ENCODE measurements at regions of chr18 and their contacts with region 1.

Region 1: DNA sequence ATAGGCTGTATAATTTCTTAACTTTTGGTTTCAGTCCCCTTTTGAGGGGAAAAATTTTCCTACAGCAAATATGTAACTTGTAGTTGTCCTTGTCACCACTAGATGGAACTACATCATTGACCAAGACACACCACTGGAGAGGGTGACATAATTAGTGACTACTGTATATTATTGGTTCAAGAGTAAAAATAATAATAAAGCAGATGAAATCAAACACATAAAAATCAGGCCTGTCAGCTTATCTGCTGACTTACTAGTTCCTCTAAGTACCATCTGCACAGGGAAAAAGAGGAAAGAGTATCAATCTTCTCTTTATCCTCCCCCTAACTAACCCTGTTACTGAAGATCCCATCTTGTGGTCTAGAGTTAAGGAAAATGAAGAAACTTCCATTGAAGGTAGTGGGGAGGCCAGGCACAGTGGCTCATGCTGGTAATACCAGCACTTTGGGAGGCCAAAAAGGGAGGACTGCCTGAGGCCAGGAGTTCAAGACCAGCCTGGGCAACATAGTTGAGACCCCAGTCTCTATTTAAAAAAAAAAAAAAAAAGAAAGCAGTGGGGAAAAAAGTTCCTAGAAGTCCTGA is 29.6 kb upstream of the ENOSF1 start:
- DNase-seq: peak; percentile 39
- H3K4me3 ChIP-seq: no peak overlapping the region
- CTCF ChIP-seq: peak; percentile 54

Region 2: GRCh38 chr18:784470-785172 is 42.6 kb after region 1 on chr18:
- in situ Hi-C with region 1: loop called (anchors 5 kb)
- DNase-seq: no peak
- H3K4me3 ChIP-seq: no peak overlapping the region
- CTCF ChIP-seq: no peak

Region 3: DNA sequence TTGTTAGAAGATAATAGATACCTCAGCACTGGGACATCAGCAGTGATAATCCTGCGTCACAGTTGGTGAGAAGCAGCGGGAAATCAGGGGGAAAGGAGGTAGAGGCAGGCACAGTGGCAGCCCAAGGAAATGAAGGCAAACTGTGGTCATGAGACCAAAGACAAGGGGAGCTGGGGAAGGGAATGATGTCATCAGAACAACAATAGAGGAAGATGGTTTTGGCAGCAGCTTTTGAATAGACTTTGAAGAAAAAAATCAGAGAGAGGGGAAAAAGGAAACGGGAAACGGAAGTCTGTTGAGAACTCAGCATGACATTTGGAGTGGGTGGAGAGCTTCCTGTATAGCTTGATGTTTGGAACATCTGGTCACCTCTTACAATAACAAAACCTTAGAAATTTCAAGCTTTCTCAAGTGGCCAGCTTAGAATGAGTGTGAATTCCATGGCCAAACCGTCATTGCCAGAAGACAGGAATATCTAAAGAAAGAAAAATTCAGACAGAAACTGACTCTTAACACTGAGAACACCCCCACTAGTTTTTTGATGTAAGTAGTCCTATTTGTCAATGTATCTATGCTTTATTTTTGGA is 88.4 kb after region 1 on chr18:
- in situ Hi-C with region 1: loop called (anchors 5 kb)
- DNase-seq: no peak
- H3K4me3 ChIP-seq: no peak overlapping the region
- CTCF ChIP-seq: no peak